ENCODE measurements at regions of chr21 and their contacts with region 1.

Region 1: GRCh38 chr21:29349702-29350101 is 51.0 kb downstream of the BACH1 start:
- DNase-seq: no peak
- H3K4me3 ChIP-seq: no peak overlapping the region
- H3K4me3 Mint-ChIP-seq: no peak overlapping the region
- H3K27ac Mint-ChIP-seq: no peak overlapping the region
- H3K4me1 ChIP-seq: peaks cover 19% of the 10 kb centered on the region
- H3K4me1 Mint-ChIP-seq: peaks cover 32% of the 10 kb centered on the region
- H3K27me3 ChIP-seq: no peaks in the 10 kb centered on the region
- H3K27me3 Mint-ChIP-seq: no peaks in the 10 kb centered on the region
- CTCF ChIP-seq: no peak

Region 2: DNA sequence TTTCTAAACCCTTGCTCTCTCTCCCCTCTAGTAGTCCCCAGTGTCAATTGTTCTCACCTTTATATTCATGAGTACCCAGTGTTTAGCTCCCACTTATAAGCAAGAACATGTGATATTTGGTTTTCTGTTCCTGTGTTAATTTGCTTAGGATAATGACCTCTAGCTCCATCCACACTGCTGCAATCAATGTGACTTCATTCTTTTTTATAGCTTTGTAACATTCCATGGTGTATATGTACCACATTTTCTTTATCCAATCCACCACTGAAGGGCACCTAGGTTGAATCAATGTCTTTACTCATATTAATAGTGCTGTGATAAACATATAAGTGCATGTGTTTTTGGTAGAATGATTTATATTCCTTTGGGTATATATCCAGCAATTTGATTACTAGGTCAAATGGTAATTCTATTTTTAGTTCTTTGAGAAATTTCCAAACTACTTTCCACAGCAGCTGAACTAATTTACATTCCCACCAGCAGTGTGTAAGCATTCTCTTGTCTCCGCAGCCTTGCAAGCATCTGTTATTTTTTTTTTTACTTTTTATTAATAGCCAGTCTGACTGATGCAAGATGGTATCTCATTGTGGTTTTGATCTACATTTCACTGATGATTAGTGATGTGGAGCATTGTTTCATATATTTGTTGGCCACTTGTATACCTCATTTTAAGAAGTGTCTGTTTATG is 634.8 kb before region 1 on chr21:
- CTCF ChIA-PET with region 1: no interaction called
- POLR2A ChIA-PET with region 1: no interaction called
- intact Hi-C with region 1: no loop called
- DNase-seq: no peak
- H3K4me3 ChIP-seq: no peak overlapping the region
- H3K4me3 Mint-ChIP-seq: no peak overlapping the region
- H3K27ac Mint-ChIP-seq: no peak overlapping the region
- H3K4me1 ChIP-seq: no peaks in the 10 kb centered on the region
- H3K4me1 Mint-ChIP-seq: no peaks in the 10 kb centered on the region
- H3K27me3 ChIP-seq: no peaks in the 10 kb centered on the region
- H3K27me3 Mint-ChIP-seq: peaks cover 7% of the 10 kb centered on the region
- CTCF ChIP-seq: no peak

Region 3: GRCh38 chr21:29334712-29335428 is 14.8 kb before region 1 on chr21:
- CTCF ChIA-PET with region 1: no interaction called
- POLR2A ChIA-PET with region 1: interaction called, 4 read pairs
- intact Hi-C with region 1: loop called (anchors 2 kb)
- DNase-seq: no peak
- H3K4me3 ChIP-seq: no peak overlapping the region
- H3K4me3 Mint-ChIP-seq: no peak overlapping the region
- H3K27ac Mint-ChIP-seq: no peak overlapping the region
- H3K4me1 ChIP-seq: 0 out of 2 replicates have a peak, but pooled peaks cover under 1% of the 10 kb centered on the region
- H3K4me1 Mint-ChIP-seq: no peaks in the 10 kb centered on the region
- H3K27me3 ChIP-seq: no peaks in the 10 kb centered on the region
- H3K27me3 Mint-ChIP-seq: no peaks in the 10 kb centered on the region
- CTCF ChIP-seq: no peak

Measured in Caco-2 (cell line).